ENCODE measurements at regions of chr20 and their contacts with region 1.

Region 1: GRCh38 chr20:23106261-23106851 is 20.2 kb upstream of the CD93 start:
- DNase-seq: peak; percentile 77 to 82 (median 80)
- H3K4me3 ChIP-seq: peak overlapping the region in 1 of 3 experiments; percentile 13
- H3K4me3 Mint-ChIP-seq: peak overlapping the region; percentile 12 to 42
- H3K27ac ChIP-seq: peak overlapping the region; percentile 82
- H3K27ac Mint-ChIP-seq: peak overlapping the region; percentile 83 to 95 (median 94)
- H3K4me1 ChIP-seq: peaks cover 70 to 82% of the 10 kb centered on the region in 2 donors
- H3K4me1 Mint-ChIP-seq: peaks cover 79% of the 10 kb centered on the region
- H3K27me3 ChIP-seq: no peaks in the 10 kb centered on the region
- H3K27me3 Mint-ChIP-seq: peaks cover 0 to 1% (median 0%) of the 10 kb centered on the region in 3 donors
- CTCF ChIP-seq: peak; percentile 40

Region 2: DNA sequence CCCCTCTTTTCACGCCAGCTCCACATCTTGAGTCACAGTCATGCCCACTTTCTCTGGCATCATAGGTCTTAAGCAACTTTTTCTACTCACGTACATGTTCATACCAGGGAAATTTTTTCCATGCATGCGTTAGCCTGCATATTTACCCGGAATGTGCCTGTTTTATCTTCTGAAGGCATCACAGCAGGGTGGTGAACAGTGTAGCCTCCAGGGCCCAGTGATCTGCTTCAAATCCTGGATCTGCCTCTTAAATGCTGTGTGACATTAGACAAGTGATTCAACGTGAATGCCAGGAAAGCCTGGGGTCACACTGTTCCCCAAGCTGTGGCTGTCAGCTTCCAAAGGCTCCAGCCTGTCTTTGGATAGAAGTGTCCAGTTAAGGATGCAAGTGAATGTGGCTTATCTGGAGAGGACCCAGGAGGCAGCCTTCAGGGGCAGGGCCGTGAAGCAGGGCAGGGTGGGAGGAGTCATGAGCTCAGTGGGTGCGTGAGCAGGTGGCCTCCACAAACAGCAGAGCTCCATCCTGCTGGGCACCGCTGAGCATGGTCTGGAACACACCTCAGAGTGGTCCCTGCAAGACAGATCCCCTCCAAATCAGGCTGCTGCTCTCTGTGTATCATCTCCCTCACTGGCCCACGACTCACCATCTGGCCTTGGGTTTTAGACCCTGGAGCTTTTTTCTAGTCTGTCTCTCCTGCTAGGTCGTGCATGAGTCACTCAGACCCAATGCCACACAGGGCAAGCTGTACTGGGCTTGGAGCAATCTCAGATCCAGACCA is 10.1 kb after region 1 on chr20:
- intact Hi-C with region 1: loop called in 1 of 2 experiments (anchors 1 kb)
- DNase-seq: peak; percentile 85 to 95 (median 86)
- H3K4me3 ChIP-seq: peak overlapping the region in 1 of 3 experiments; percentile 0
- H3K4me3 Mint-ChIP-seq: peak overlapping the region; percentile 38 to 44
- H3K27ac ChIP-seq: peak overlapping the region; percentile 96 to 100
- H3K27ac Mint-ChIP-seq: peak overlapping the region; percentile 96 to 100 (median 98)
- H3K4me1 ChIP-seq: peaks cover 87 to 91% of the 10 kb centered on the region in 2 donors
- H3K4me1 Mint-ChIP-seq: peaks cover 88% of the 10 kb centered on the region
- H3K27me3 ChIP-seq: no peaks in the 10 kb centered on the region
- H3K27me3 Mint-ChIP-seq: no peaks in the 10 kb centered on the region
- CTCF ChIP-seq: no peak

Measured in CD14-positive monocyte (primary cell).